OCI-LY7 (cell line): ENCODE measurements at regions of chr2 and their contacts with region 1.

Region 1: GRCh38 chr2:237322564-237322963 is 91.4 kb downstream of the COL6A3 start:
- DNase-seq: peak; percentile 21
- H3K4me3 ChIP-seq: no peak overlapping the region
- H3K27ac ChIP-seq: no peak overlapping the region
- H3K4me1 ChIP-seq: no peaks in the 10 kb centered on the region
- CTCF ChIP-seq: peak; percentile 53; the same call in 1 of the 2 replicates

Region 2: GRCh38 chr2:237122214-237122666 is 200.3 kb before region 1 on chr2:
- CTCF ChIA-PET with region 1: no interaction called
- POLR2A ChIA-PET with region 1: no interaction called
- intact Hi-C with region 1: loop called (anchors 1 kb)
- DNase-seq: peak; percentile 47
- H3K4me3 ChIP-seq: no peak overlapping the region
- H3K27ac ChIP-seq: no peak overlapping the region
- H3K4me1 ChIP-seq: peaks cover 5% of the 10 kb centered on the region
- CTCF ChIP-seq: peak; percentile 67

Region 3: DNA sequence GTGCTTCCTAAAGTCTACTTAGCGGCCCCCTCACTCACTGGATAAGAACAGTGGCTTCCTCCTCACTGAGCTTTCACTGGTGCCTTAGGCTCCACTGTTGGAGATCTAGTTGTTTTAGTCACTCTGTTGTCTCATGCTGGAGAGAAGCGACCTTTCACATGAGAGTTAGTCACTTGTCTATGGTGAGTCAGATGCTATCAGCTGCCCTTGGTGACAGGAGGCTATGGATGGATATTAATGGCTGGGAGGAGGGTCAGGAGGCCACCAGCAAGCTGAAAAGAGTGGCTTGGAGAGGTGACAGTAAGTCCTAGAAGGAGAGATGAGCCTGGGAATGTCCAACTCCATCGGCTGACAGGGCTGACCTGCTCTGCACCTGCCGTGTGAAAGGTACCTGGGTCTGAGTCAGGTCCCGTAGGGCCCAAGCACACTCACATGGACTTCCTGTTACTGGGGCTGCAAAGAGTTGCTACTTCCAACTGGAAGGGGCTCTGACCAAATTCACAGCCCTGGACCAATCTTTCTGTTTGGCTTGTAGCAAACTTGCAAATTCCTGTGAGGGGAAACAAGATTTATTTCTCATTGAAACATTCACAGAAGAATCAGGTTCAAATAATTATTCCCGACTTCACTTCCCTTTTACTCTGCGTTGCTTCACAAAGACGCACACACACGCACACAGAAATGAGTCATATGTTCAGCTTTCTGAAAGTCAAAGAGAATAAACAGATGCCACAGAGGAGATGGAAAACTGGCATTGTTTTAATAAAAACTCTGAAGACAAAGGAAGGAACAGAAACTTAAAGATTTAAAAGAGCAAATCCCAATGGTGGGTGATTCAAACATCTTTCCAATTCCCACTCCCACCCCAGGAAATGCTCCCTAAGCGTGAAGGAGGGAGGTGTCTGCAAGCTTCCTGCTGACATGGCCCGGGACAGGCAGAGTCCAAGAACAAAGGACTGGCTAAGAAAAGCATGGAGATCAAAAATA is 1321.8 kb after region 1 on chr2:
- CTCF ChIA-PET with region 1: no interaction called
- POLR2A ChIA-PET with region 1: no interaction called
- intact Hi-C with region 1: no loop called
- DNase-seq: no peak
- H3K4me3 ChIP-seq: no peak overlapping the region
- H3K27ac ChIP-seq: no peak overlapping the region
- H3K4me1 ChIP-seq: no peaks in the 10 kb centered on the region
- CTCF ChIP-seq: no peak